Activated CD8-positive, alpha-beta T cell treated with anti-CD3 and anti-CD28 coated beads for 36 hours (primary cell): ENCODE measurements at regions of chr10 and their contacts with region 1.

Region 1: GRCh38 chr10:120948889-120949608 is 97.9 kb downstream of the WDR11 start:
- DNase-seq: peak; percentile 68
- ATAC-seq: peak; percentile 98
- H3K4me3 Mint-ChIP-seq: no peak overlapping the region
- H3K27ac Mint-ChIP-seq: no peak overlapping the region
- H3K4me1 Mint-ChIP-seq: no peaks in the 10 kb centered on the region
- H3K27me3 Mint-ChIP-seq: peaks cover 35% of the 10 kb centered on the region
- CTCF ChIP-seq: peak; percentile 75

Region 2: GRCh38 chr10:120917521-120918250 is 31.4 kb before region 1 on chr10:
- CTCF ChIA-PET with region 1: no interaction called
- POLR2A ChIA-PET with region 1: no interaction called
- intact Hi-C with region 1: no loop called
- DNase-seq: no peak
- ATAC-seq: no peak
- H3K4me3 Mint-ChIP-seq: no peak overlapping the region
- H3K27ac Mint-ChIP-seq: no peak overlapping the region
- H3K4me1 Mint-ChIP-seq: no peaks in the 10 kb centered on the region
- H3K27me3 Mint-ChIP-seq: no peaks in the 10 kb centered on the region
- CTCF ChIP-seq: no peak

Region 3: DNA sequence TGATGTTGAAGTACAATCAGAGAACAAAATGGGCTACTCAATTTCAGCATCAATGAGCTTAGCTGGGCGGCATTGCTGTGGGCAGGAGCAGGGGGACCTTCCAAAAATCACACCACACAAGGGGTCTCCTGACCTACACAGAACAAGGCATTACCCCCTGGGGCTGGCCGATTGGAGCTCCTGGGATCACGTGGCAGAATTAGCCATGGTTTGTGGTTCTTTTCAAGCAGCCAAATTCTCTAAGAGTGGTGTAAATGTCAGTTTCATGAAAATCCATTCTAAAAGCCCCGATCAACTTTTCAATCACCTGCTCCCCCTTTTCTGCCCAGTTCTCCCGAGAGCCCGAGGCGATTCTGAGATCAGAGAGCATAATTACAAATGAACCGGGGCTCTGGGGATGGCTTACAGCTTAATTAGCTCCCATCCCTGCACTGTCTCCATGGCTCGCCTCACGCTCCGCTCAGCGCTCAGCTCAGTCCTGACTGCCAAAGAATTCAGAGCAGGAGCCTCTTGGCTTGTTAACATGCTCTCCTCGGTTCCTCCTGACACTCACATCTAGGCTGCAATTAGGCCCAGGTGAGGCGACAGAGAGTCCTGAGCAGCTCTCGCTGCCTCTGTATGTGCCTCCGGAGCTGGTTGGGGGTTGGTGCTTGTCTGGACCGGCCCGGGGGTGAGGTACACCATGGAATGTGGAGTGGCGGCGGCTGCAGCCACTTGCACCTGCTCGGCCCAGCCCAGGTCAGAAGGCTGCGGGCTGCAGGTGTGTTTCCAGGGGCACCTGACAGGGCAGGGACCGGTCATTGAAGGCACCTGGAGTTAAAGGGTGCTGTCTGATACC is 13.9 kb after region 1 on chr10:
- CTCF ChIA-PET with region 1: interaction called, 11 read pairs
- POLR2A ChIA-PET with region 1: no interaction called
- intact Hi-C with region 1: no loop called
- DNase-seq: no peak
- ATAC-seq: no peak
- H3K4me3 Mint-ChIP-seq: no peak overlapping the region
- H3K27ac Mint-ChIP-seq: no peak overlapping the region
- H3K4me1 Mint-ChIP-seq: no peaks in the 10 kb centered on the region
- H3K27me3 Mint-ChIP-seq: no peaks in the 10 kb centered on the region
- CTCF ChIP-seq: no peak

Region 4: GRCh38 chr10:121608469-121609190 is 659.6 kb after region 1 on chr10:
- CTCF ChIA-PET with region 1: interaction called, 10 read pairs
- POLR2A ChIA-PET with region 1: no interaction called
- intact Hi-C with region 1: loop called (anchors 10 kb)
- DNase-seq: peak; percentile 40
- ATAC-seq: peak; percentile 53
- H3K4me3 Mint-ChIP-seq: no peak overlapping the region
- H3K27ac Mint-ChIP-seq: no peak overlapping the region
- H3K4me1 Mint-ChIP-seq: no peaks in the 10 kb centered on the region
- H3K27me3 Mint-ChIP-seq: peaks cover 22% of the 10 kb centered on the region
- CTCF ChIP-seq: peak; percentile 82

Region 5: DNA sequence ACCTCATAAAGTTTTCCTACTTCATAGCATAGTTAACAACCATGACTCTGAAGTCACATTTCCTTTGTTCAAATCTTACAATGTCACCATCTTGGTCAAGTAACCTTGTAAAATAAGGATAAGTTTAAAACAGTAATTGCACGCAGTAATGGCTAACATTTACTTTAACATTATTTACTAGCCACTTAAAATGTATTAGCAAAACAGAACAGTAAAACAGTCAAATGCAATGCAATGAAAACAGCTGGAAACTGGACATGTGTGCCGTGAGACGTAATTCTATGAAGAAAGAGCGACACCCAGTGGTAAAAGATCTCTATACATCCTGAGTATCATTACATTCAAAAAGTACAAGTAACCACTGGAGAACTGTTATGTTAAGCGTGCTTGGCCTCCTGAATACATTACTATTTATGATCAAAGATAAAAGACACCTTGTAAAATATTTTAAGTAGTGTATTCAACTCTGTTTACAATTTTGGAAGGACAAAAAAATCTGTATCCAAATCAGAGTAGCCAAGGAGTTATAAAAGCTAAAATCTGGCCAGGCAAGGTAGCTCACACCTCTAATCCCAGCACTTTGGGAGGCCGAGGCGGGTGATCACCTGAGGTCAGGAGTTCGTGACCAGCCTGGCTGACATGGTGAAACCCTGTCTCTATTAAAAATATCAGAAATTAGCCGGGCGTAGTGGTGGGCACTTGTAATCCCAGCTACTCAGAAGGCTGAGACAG is 951.6 kb after region 1 on chr10:
- CTCF ChIA-PET with region 1: interaction called, 10 read pairs
- POLR2A ChIA-PET with region 1: no interaction called
- intact Hi-C with region 1: no loop called
- DNase-seq: peak; percentile 5
- ATAC-seq: peak; percentile 70
- H3K4me3 Mint-ChIP-seq: no peak overlapping the region
- H3K27ac Mint-ChIP-seq: no peak overlapping the region
- H3K4me1 Mint-ChIP-seq: peaks cover 2% of the 10 kb centered on the region
- H3K27me3 Mint-ChIP-seq: no peaks in the 10 kb centered on the region
- CTCF ChIP-seq: peak; percentile 94